Heart right ventricle (tissue), 16 donors: ENCODE measurements at regions of chr16 and their contacts with region 1.

Region 1: GRCh38 chr16:15518390-15519351 is 84.3 kb downstream of the BMERB1 start:
- DNase-seq: peak; percentile 27 to 28
- ATAC-seq: peak in 7 of 8 donors; percentile 32 to 75 (median 43)
- H3K4me3 ChIP-seq: no peak overlapping the region
- H3K27ac ChIP-seq: peak overlapping the region in 4 of 10 donors; percentile 20 to 31 (median 30)
- H3K4me1 ChIP-seq: peaks cover 0 to 54% (median 16%) of the 10 kb centered on the region in 9 donors
- H3K27me3 ChIP-seq: no peaks in the 10 kb centered on the region
- CTCF ChIP-seq: no peak

Region 2: GRCh38 chr16:15440852-15441251 is 77.8 kb before region 1 on chr16:
- intact Hi-C with region 1: loop called in 1 of 10 experiments (anchors 10 kb)
- DNase-seq: no peak
- ATAC-seq: peak in 1 of 8 donors; percentile 36
- H3K4me3 ChIP-seq: no peak overlapping the region
- H3K27ac ChIP-seq: peak overlapping the region in 5 of 10 donors; percentile 16 to 55 (median 25)
- H3K4me1 ChIP-seq: peaks cover 0 to 19% (median 3%) of the 10 kb centered on the region in 9 donors
- H3K27me3 ChIP-seq: peaks cover 0 to 8% (median 0%) of the 10 kb centered on the region in 7 donors
- CTCF ChIP-seq: no peak